Adrenal gland (tissue), 19 donors: ENCODE measurements at regions of chr4 and their contacts with region 1.

Region 1: GRCh38 chr4:40417941-40418340 is 82.8 kb downstream of the CHRNA9 start:
- DNase-seq: no peak
- H3K4me3 ChIP-seq: no peak overlapping the region
- H3K27ac ChIP-seq: no peak overlapping the region
- H3K4me1 ChIP-seq: no peaks in the 10 kb centered on the region
- H3K27me3 ChIP-seq: no peaks in the 10 kb centered on the region
- CTCF ChIP-seq: no peak
- POLR2A ChIP-seq: no peak

Region 2: GRCh38 chr4:40367451-40367850 is 50.5 kb before region 1 on chr4:
- intact Hi-C with region 1: loop called in 1 of 2 experiments (anchors 2 kb)
- DNase-seq: no peak
- H3K4me3 ChIP-seq: no peak overlapping the region
- H3K27ac ChIP-seq: no peak overlapping the region
- H3K4me1 ChIP-seq: no peaks in the 10 kb centered on the region
- H3K27me3 ChIP-seq: no peaks in the 10 kb centered on the region
- CTCF ChIP-seq: no peak
- POLR2A ChIP-seq: no peak